Ascending aorta (tissue), 2 donors: ENCODE measurements at regions of chr19 and their contacts with region 1.

Region 1: DNA sequence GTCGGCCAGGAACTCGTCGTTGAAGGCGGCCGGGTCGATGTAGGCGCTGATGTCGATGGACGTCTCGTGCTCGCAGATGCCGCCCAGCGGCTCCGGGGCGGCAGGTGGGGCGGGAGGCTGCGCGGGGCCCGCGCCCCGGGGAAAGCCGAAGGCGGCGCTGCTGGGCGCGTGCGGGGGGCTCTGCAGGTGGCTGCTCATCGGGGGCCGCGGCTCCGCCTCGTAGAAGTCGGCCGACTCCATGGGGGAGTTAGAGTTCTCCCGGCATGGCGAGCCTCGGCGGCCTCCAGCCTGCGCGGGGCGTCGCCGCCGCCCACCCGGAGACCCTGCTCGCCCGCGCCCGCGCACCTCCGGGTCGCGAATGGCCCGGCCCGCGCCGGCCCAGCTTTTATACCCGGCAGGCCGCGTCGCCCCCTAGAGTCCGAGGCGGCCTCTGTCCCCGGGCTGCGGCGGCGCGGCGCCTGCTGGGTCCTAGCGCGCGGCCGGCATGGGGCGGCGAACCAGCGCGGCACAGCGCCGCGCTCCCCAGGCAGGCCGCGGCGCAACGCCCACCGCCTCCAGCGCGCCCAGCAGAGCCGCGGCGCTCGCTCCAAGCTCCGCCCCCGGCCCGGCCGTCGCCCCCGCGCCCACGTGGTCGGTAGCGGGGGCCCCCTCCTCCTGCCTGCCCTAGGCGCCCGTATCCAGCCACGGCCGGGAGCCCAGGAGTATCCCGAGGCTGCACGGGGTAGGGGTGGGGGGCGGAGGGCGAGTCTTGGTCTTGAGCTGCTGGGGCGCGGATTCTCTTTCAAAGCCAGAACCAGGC is at the start of gene CEBPA:
- DNase-seq: peak in 1 of 2 donors; percentile 83
- H3K4me3 ChIP-seq: peak within 1 kb of the TSS; percentile 84 to 88
- H3K27ac ChIP-seq: peak within 1 kb of the TSS; percentile 47 to 71
- H3K4me1 ChIP-seq: peaks cover 10 to 16% of the 10 kb centered on the region in 2 donors
- H3K27me3 ChIP-seq: peaks cover 4% of the 10 kb centered on the region
- CTCF ChIP-seq: peak in 2 of 3 experiments; percentile 30 to 78
- total RNA-seq, gene CEBPA: 14.9 TPM

Region 2: GRCh38 chr19:32971715-32972540 is 330.4 kb before region 1 on chr19 and contains the starts of genes CEP89 and FAAP24:
- intact Hi-C with region 1: loop called (anchors 5 kb)
- DNase-seq: peak; percentile 96 to 99
- H3K4me3 ChIP-seq: peak within 1 kb of the TSS; percentile 70 to 83
- H3K27ac ChIP-seq: peak within 1 kb of the TSS; percentile 63 to 74
- H3K4me1 ChIP-seq: peaks cover 0 to 9% of the 10 kb centered on the region in 2 donors
- H3K27me3 ChIP-seq: no peaks in the 10 kb centered on the region
- CTCF ChIP-seq: no peak
- total RNA-seq, gene CEP89: 7.1 TPM
- total RNA-seq, gene FAAP24: not detected

Region 3: DNA sequence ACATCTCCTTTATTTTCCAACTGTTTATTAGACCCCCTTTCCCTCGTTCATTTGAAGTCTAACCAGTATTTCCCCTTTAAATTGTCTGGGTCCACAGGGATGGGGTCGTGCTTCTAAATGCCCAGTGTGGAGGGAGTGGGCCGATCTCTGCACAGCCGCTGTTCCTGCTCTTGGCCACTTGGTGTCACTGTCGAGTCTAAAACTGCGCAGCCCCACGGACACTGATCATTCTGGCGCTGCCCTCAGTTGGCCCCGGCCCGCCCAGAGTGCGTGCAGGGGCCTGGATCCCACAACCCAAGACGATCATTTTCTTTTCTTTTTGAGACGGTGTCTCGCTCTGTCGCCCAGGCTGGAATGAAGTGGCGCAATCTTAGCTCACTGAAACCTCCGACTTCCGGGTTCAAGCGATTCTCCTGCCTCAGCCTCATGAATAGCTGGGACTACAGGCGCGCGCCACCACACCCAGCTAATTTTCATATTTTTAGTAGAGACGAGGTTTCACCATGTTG is 158.4 kb before region 1 on chr19:
- intact Hi-C with region 1: loop called (anchors 10 kb)
- DNase-seq: peak in 1 of 2 donors; percentile 77
- H3K4me3 ChIP-seq: no peak overlapping the region
- H3K27ac ChIP-seq: no peak overlapping the region
- H3K4me1 ChIP-seq: no peaks in the 10 kb centered on the region
- H3K27me3 ChIP-seq: no peaks in the 10 kb centered on the region
- CTCF ChIP-seq: peak; percentile 84 to 95 (median 93)

Region 4: DNA sequence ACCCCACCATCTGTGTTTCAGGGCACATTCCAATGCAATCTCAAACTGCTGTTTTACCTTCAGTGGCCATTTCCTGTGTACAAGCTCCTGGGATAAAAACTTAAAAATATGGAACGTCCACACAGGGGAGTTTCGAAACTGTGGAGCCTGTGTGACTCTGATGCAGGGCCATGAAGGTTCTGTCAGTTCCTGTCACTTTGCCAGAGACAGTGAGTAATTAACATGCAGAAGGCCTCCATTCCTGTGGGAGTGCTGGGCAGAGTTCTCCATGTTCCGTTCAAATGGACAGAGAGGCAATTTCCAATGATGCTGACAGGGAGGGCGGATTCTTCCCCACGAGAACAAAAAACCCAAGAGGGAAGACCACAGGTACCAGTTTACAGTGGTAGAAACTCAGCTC is 146.0 kb before region 1 on chr19:
- intact Hi-C with region 1: no loop called
- DNase-seq: no peak
- H3K4me3 ChIP-seq: no peak overlapping the region
- H3K27ac ChIP-seq: no peak overlapping the region
- H3K4me1 ChIP-seq: no peaks in the 10 kb centered on the region
- H3K27me3 ChIP-seq: no peaks in the 10 kb centered on the region
- CTCF ChIP-seq: no peak

Region 5: DNA sequence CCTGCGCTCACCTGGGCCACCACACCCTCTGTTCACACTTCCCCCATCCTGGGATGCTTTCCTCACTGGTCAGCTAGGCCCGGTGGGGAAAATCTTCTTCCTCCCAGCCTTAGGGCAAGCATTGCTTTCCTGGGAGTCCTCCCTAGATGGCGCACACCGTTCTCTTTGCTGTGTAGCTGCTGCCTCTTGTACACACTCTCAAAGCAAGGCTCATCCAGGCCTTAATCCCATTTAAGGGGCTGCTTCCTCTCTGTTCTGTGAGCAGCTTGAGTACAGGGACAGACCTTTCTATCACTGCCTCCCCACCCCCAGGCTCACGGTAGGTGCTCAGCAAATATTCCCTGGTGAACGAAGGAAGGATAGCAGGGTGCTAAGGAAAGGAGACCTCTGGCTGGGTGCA is 87.8 kb before region 1 on chr19:
- intact Hi-C with region 1: no loop called
- DNase-seq: no peak
- H3K4me3 ChIP-seq: no peak overlapping the region
- H3K27ac ChIP-seq: no peak overlapping the region
- H3K4me1 ChIP-seq: no peaks in the 10 kb centered on the region
- H3K27me3 ChIP-seq: no peaks in the 10 kb centered on the region
- CTCF ChIP-seq: no peak

Region 6: DNA sequence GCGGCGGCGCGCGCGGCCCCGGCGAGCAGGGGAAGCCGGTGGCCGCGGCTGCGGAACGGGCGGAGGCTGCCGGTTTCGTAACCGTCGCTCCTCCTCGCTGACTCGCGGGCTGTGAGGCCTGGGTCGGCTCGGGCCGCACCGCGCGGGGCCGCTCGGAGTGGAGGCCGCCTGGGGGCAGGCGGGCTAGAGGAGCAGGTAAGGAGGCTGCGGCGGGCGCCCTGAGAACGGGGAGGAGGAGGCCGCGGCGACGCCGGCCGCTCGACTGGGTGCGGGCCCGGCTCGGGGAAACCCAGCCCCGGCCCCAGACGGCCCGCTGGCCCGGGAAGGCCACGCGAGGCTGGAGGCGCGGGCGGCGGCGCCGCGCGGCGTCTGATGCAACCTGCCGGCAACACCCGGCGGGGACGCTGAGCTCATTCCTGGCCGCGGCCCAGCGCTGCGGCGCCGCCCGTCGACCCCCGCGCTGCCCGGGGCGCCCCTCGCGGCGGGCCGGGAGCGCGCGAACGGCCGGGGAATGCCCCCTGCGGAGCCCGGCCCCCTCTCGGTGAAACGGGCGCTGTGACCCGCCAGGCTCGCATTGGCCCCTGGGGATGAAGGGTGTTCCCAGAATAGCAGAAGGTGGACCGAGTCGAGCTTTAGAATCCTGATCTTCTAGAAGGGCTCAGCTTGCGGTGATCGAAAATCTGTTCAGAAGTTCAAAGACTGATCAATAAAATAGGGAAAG is 71.5 kb after region 1 on chr19 and contains the start of gene CEBPG:
- intact Hi-C with region 1: loop called (anchors 1 kb)
- DNase-seq: no peak
- H3K4me3 ChIP-seq: peak within 1 kb of the TSS; percentile 87
- H3K27ac ChIP-seq: peak within 1 kb of the TSS; percentile 96 to 97
- H3K4me1 ChIP-seq: peaks cover 0 to 19% of the 10 kb centered on the region in 2 donors
- H3K27me3 ChIP-seq: no peaks in the 10 kb centered on the region
- CTCF ChIP-seq: peak in 1 of 3 experiments; percentile 28
- total RNA-seq, gene CEBPG: 21.9 TPM

Region 7: DNA sequence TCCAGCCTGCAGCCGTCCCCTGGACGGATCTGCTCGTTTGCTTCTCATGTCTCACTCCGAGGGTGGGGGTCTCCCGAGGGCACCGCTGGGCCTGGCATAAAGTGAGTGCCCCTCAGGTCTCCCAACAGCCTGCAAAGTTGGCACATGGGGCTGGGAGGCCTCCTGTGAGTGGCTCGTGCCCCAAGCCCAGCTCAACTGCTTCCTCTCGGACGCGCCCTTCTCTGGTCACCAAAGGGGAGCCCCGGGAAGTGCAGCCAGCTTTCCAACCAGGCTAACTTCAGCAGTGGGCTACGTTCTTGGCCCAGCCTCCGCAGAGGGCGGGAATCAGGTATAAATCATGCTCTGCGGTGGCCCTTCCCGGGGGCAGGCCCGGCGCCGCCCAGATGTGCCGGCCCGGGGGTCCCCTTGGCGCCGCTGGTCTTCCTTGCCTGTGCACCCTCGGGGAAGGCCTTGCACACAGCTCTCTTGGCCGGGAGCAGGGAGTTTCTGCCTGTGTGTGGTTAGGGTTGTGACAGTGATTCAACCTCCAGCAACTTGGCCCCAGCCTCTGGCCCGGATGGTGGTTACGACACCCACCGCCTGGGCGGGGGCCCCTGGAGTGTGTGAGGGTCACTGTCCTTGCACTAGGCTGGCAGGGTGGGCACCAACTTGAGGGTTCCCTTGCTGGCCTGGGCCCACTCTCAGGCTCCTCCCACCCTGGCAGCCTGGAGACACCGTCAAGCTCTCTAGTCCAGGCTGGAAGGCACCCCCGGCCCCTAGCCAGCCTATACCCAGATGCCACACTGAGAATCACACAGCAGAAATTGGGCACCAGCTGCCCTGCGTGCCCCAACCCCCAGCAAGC is 91.9 kb after region 1 on chr19:
- intact Hi-C with region 1: loop called (anchors 5 kb)
- DNase-seq: peak in 1 of 2 donors; percentile 83
- H3K4me3 ChIP-seq: no peak overlapping the region
- H3K27ac ChIP-seq: peak overlapping the region in 1 of 2 donors; percentile 34
- H3K4me1 ChIP-seq: peaks cover 0 to 25% of the 10 kb centered on the region in 2 donors
- H3K27me3 ChIP-seq: no peaks in the 10 kb centered on the region
- CTCF ChIP-seq: no peak

Region 8: DNA sequence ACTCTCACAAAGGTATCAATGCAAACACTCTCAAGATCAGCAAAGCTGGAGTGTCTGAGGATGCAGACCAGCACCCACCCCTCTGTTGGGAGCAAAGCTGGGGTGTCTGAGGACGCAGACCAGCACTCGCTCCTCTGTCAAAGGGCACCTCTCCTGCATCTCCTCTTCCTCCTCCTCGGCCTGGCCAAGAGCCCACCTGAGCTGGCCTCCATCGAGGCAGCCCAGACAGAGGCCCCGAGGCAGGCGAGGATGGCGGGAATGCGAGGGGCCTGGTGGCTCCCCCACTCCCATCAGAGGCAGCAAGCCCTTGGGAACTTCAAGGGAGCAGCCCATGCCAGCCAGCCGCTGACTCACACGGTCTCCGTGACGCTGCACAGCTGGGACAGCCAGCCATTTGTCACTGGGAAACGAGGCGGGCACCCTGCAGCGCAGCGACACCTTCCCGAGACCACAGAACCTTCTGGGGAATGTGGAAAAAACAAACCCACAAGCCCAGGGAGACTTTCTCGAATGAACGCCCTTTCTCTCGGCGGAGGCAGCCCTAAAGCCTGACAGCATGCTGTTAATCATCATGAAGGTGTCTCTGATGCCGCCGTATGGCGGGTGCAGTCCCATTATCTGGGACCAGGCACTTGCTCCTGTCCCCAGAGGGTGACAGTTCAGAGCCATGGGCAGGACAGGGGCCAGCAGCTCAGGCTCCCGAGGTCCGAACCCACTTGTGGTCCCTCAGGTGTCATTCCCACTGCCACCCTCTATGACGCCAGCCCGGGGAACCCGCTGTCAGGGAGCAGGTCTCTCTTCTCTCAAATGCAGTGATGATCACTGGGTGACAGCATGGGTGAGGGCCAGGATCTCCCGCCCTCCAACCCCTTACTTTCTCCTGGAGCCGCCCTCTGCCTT is 166.1 kb after region 1 on chr19:
- intact Hi-C with region 1: no loop called
- DNase-seq: peak in 1 of 2 donors; percentile 61
- H3K4me3 ChIP-seq: no peak overlapping the region
- H3K27ac ChIP-seq: no peak overlapping the region
- H3K4me1 ChIP-seq: no peaks in the 10 kb centered on the region
- H3K27me3 ChIP-seq: no peaks in the 10 kb centered on the region
- CTCF ChIP-seq: no peak